HCT116 (cell line): ENCODE measurements at regions of chr11 and their contacts with region 1.

Region 1: DNA sequence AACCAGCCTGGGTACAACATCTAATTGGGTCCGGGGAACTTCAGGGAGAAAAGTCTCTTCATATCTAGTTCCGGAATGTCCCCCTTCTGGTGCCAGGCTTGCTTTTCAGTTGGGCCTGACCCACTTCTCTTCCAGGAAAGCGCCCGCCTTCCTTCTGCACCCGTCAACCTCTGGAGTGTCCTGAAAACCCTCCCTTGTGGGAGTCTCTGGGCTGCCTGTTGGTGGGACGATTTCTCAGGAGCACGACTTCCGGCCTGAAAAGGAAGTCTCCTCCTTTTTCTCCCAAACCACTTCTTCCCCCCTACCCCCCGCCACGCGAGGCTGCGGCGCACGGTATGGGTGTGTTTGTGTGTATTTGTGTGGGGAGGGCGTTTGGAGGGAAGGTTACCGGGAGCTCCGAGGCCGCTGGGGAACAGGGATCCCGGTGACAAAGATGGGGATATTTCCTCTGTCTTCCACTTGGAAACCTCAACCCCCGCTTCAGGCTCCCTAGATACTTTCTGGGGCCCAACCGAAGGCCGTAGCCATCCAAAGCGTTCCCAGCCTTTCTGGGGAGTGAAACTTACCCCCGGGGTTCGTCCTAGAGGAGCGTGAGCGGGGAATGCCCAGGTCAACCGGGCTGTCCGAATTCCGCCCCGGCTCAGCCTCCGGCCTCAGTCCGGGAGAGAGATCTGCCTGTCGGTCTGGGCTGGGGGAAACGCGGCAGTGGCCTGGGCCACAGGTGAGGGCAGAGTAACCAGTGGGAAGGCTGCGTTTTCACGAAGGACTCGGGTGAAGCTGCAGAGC is at the start of gene NKAPD1:
- DNase-seq: peak; percentile 83
- ATAC-seq: peak; percentile 88
- H3K4me3 ChIP-seq: peak within 1 kb of the TSS; percentile 83 to 98
- H3K27ac ChIP-seq: peak within 1 kb of the TSS; percentile 69
- H3K4me1 ChIP-seq: peaks cover 0 to 14% of the 10 kb centered on the region in 2 experiments; a peak in 3 of 4 replicates
- H3K27me3 ChIP-seq: no peaks in the 10 kb centered on the region
- CTCF ChIP-seq: 0 out of 6 replicates have a peak, but pooled peaks of 1 of the 3 experiments have one; percentile 9
- POLR2A ChIP-seq: peak; percentile 61
- RAD21 ChIP-seq: no peak
- total RNA-seq, gene NKAPD1: 19.4 TPM

Region 2: GRCh38 chr11:112024773-112025678 is 49.2 kb before region 1 on chr11 and contains the start of gene DLAT:
- CTCF ChIA-PET with region 1: no interaction called
- POLR2A ChIA-PET with region 1: no interaction called
- RAD21 ChIA-PET with region 1: no interaction called
- intact Hi-C with region 1: loop called (anchors 1 kb)
- DNase-seq: peak; percentile 86
- ATAC-seq: peak; percentile 88
- H3K4me3 ChIP-seq: peak within 1 kb of the TSS; percentile 82 to 98
- H3K27ac ChIP-seq: peak within 1 kb of the TSS; percentile 98
- H3K4me1 ChIP-seq: peaks cover 7 to 8% of the 10 kb centered on the region in 2 experiments; a peak in 3 of 4 replicates
- H3K27me3 ChIP-seq: no peaks in the 10 kb centered on the region
- CTCF ChIP-seq: no peak
- POLR2A ChIP-seq: peak; percentile 89
- RAD21 ChIP-seq: no peak
- total RNA-seq, gene DLAT: 68.1 TPM